CD4-positive, alpha-beta memory T cell (primary cell): ENCODE measurements at regions of chr1 and their contacts with region 1.

Region 1: DNA sequence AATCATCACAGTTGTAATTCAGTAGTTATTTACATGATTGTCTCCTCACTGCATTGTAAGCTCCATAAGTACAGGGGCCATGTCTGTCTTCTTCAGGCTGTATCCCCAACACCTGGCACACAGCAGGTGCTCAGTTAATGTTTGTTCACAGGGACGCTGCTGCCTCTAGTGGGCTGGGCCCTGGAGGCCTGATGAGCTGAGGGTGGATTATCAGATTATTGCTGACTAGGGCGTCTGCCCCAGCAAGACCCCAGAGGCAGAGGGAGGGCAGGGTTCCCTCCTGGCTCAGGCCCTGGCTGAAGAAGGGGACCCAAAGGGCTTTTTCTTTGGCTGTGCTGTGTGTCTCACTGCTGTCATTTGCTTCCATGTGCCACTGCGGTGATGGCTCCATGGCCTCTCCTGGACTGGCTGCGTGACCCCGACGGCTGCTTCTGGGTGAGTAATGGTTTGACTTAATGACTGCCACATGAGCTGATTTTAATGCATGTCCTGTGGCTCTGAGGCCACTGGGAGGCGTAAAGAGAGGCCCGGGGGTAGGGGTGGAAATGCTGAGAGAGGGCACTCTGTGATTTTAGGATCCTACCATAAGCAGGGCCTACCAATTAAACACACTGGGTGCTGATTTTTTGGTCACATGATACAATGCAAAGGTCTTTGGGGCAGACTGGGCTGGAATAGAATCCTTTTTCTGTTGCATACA is 20.8 kb upstream of the EPB41 start:
- DNase-seq: peak in 4 of 5 donors; percentile 26 to 33 (median 30)
- H3K4me3 ChIP-seq: no peak overlapping the region
- H3K4me3 Mint-ChIP-seq: peak overlapping the region in 1 of 8 donors; percentile 35
- H3K27ac ChIP-seq: no peak overlapping the region
- H3K27ac Mint-ChIP-seq: peak overlapping the region in 2 of 7 donors; percentile 30 to 72
- H3K4me1 ChIP-seq: peaks cover 40% of the 10 kb centered on the region
- H3K4me1 Mint-ChIP-seq: peaks cover 38 to 62% (median 46%) of the 10 kb centered on the region in 4 donors
- H3K27me3 ChIP-seq: no peaks in the 10 kb centered on the region
- H3K27me3 Mint-ChIP-seq: no peaks in the 10 kb centered on the region

Region 2: DNA sequence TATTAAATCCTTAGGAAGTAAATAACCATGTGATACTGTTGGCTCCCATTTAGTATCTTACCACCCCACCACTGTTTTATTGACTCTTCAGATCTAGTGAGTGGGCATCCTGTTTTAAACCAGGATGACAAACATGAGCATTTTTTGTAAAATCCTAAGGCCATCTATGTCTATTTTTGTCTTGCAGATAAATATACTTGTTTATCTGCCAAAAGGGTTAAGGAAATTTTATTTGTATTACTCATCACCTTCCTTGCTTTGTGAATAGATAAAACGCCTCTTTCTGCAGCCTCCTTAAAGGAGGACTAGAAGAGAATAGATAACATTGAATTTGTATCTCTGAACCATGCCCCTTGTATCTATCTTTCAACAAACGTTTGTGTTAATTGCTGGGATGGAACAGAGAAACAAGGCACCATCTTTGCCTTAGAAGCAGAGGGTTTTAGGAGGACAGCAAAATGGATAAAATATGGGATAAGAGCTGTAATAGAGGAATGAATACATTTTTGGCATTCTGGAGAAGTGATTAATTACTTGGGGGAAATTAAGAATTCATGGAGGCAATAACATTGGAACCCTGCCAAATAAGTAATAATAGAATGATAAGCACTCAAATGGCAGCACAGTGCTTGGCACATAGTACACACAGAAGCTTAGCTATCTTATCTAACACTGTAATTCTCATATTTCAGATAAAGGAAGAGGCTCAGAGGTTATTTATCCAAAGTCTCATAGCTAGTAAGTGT is 142.1 kb before region 1 on chr1:
- CTCF ChIA-PET with region 1: no interaction called
- POLR2A ChIA-PET with region 1: no interaction called
- intact Hi-C with region 1: no loop called
- DNase-seq: no peak
- H3K4me3 ChIP-seq: no peak overlapping the region
- H3K4me3 Mint-ChIP-seq: peak overlapping the region in 6 of 8 donors; percentile 6 to 50 (median 24)
- H3K27ac ChIP-seq: no peak overlapping the region
- H3K27ac Mint-ChIP-seq: peak overlapping the region in 5 of 7 donors; percentile 4 to 55 (median 48)
- H3K4me1 ChIP-seq: peaks cover 100% of the 10 kb centered on the region
- H3K4me1 Mint-ChIP-seq: peaks cover 34 to 69% (median 45%) of the 10 kb centered on the region in 4 donors
- H3K27me3 ChIP-seq: no peaks in the 10 kb centered on the region
- H3K27me3 Mint-ChIP-seq: no peaks in the 10 kb centered on the region

Region 3: GRCh38 chr1:28983509-28984310 is 90.2 kb after region 1 on chr1:
- CTCF ChIA-PET with region 1: interaction called, 10 read pairs
- POLR2A ChIA-PET with region 1: no interaction called
- intact Hi-C with region 1: loop called (anchors 5 kb)
- DNase-seq: no peak
- H3K4me3 ChIP-seq: no peak overlapping the region
- H3K4me3 Mint-ChIP-seq: peak overlapping the region in 1 of 8 donors; percentile 4
- H3K27ac ChIP-seq: no peak overlapping the region
- H3K27ac Mint-ChIP-seq: peak overlapping the region in 4 of 7 donors; percentile 11 to 29 (median 16)
- H3K4me1 ChIP-seq: peaks cover 45% of the 10 kb centered on the region
- H3K4me1 Mint-ChIP-seq: peaks cover 38 to 74% (median 56%) of the 10 kb centered on the region in 4 donors
- H3K27me3 ChIP-seq: no peaks in the 10 kb centered on the region
- H3K27me3 Mint-ChIP-seq: no peaks in the 10 kb centered on the region